Dorsolateral prefrontal cortex (tissue), 120 donors: ENCODE measurements at regions of chr20 and their contacts with region 1.

Region 1: DNA sequence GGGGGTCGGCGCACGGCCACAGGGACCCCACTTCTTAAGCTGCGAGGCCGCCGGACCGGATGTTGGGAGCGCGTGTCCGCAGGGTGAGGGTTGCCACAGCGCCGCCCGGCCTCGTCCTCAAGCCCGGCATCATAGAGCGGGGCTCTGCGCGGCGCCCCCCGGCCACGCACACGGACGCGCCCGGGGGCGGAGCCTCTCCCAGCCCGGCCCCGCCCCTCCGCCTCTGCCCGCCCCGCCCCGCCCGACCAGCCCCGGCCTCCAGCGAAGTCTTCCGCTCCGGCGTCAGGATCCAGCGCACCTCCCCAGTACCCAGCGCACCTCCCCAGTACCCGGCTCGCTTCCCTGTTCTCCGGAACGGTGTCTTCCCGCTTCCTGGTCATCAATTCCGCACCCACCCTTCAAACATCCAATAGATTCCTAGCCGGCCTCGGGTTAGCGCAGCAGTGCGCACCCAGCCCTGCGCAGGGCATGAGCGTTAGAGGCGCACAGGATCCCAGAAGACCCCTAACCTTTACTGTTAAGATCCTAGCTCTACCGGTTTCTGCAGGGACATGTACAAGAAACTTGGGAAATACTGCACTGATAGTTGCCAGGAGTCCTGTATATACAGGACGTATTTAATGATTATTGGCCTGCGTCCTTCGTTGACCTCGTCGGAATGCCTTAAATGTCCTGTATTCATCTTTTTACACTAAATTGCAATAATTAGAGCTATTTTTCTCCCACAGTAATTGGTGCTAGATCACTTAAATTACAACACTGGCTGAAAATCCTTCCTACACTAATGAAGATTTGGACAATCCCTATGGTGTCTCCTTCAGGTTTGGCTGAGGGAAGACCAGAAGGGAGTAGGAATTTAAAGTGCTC is 535 bp upstream of the DNAAF9 start:
- DNase-seq: peak; percentile 56 to 89 (median 74)
- H3K4me3 ChIP-seq: peak overlapping the region; percentile 55 to 96 (median 86)
- H3K27ac ChIP-seq: peak overlapping the region; percentile 45 to 98 (median 94)
- H3K27me3 ChIP-seq: no peaks in the 10 kb centered on the region
- CTCF ChIP-seq: peak in 3 of 56 donors; percentile 4 to 11 (median 10)

Region 2: DNA sequence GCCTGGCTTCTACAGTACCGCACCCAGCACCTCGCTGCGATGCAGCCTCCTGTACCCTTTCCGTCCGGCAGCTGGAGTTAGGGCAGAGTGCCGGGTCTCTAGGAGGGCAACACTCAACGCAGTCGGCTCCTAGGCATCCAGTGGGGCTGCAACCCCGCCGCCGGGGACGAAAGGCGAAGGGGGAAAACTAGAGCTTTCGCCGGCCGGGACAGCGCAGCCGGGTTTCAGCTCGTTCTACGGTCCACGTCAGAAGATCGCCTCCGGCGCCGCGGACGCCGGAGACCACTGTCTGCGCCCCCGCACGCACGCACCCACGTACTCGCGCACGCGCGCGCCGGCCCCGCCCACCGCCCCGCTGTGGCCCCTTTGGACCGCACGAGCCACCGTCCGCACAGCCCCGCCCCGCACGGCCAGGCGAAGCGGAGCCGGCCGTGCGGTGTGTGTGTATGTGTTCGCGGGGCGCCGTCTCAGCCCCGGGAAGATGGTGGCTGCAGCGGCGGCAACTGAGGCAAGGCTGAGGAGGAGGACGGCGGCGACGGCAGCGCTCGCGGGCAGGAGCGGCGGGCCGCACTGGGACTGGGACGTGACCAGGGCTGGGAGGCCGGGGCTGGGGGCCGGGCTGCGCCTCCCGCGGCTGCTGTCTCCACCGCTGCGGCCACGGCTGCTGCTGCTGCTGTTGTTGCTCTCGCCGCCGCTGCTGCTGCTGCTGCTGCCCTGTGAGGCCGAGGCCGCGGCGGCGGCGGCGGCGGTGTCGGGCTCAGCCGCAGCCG is 62.8 kb after region 1 on chr20 and contains the start of gene ATRN:
- intact Hi-C with region 1: loop called (anchors 2 kb)
- DNase-seq: peak; percentile 79 to 95 (median 88)
- H3K4me3 ChIP-seq: peak within 1 kb of the TSS; percentile 56 to 100 (median 96)
- H3K27ac ChIP-seq: peak within 1 kb of the TSS; percentile 29 to 95 (median 84)
- H3K27me3 ChIP-seq: no peaks in the 10 kb centered on the region
- CTCF ChIP-seq: peak in 27 of 56 donors; percentile 11 to 59 (median 33)
- total RNA-seq, gene ATRN: 35.4 to 78.7 (median 57.5) TPM